ENCODE measurements at regions of chr14 and their contacts with region 1.

Region 1: GRCh38 chr14:76647697-76648298 is 113.5 kb upstream of the VASH1 start:
- DNase-seq: peak; percentile 47
- H3K4me3 ChIP-seq: no peak overlapping the region
- H3K27ac ChIP-seq: no peak overlapping the region
- H3K4me1 ChIP-seq: no peaks in the 10 kb centered on the region
- H3K27me3 ChIP-seq: peaks cover 0 to 2% of the 10 kb centered on the region in 2 experiments
- CTCF ChIP-seq: peak; percentile 81 to 87
- POLR2A ChIP-seq: no peak

Region 2: DNA sequence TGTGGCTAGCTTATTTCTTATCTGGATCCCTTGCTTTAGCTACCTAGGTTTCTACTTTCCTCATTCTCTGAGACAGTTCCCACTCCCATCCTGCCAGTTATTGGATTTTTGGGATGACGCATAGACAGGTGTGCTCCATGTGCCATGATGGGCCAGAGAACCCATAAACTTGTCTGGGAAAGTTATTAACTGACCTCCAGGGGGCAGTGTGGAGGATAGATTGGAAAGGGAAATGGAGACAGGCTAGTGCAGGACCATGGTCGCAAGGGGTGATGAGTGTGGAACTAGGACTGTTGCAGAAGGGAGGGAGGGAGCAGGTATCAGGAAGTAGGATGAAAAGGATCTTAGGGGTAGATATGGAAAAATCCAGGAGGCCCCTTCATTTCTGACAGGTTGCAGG is 191.6 kb before region 1 on chr14:
- CTCF ChIA-PET with region 1: interaction called, 53 read pairs
- POLR2A ChIA-PET with region 1: no interaction called
- dilution Hi-C with region 1: no loop called
- intact Hi-C with region 1: loop called (anchors 1 kb)
- DNase-seq: peak; percentile 45
- H3K4me3 ChIP-seq: no peak overlapping the region
- H3K27ac ChIP-seq: no peak overlapping the region
- H3K4me1 ChIP-seq: no peaks in the 10 kb centered on the region
- H3K27me3 ChIP-seq: no peaks in the 10 kb centered on the region
- CTCF ChIP-seq: peak; percentile 55 to 57
- POLR2A ChIP-seq: no peak

Region 3: GRCh38 chr14:76473481-76474263 is 174.1 kb before region 1 on chr14:
- CTCF ChIA-PET with region 1: interaction called, 4 read pairs
- POLR2A ChIA-PET with region 1: no interaction called
- dilution Hi-C with region 1: no loop called
- intact Hi-C with region 1: loop called (anchors 5 kb)
- DNase-seq: no peak
- H3K4me3 ChIP-seq: no peak overlapping the region
- H3K27ac ChIP-seq: no peak overlapping the region
- H3K4me1 ChIP-seq: no peaks in the 10 kb centered on the region
- H3K27me3 ChIP-seq: peaks cover 2 to 7% of the 10 kb centered on the region in 2 experiments
- CTCF ChIP-seq: peak in 1 of 2 donors; percentile 22
- POLR2A ChIP-seq: no peak

Region 4: DNA sequence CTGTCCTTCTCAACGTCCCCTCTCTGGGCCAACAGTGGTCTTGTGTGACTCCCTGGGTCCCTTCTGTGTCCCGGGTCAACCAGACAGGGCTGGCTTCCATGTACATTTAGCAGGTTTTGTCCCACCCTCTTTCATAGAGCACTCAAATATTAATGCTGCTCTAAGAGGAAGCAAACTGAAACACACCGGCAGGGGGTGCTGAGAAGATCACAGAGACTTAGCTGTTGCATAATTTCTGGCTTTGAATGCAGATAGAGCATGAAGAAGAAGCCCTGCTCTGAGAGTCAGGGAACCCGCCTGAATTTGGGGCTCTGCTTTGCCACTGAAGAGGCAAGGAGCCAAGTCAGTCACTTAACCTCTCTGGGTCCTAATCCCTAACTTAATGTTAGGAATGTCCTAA is 133.2 kb before region 1 on chr14:
- CTCF ChIA-PET with region 1: interaction called, 9 read pairs
- POLR2A ChIA-PET with region 1: no interaction called
- dilution Hi-C with region 1: no loop called
- intact Hi-C with region 1: loop called (anchors 1 kb)
- DNase-seq: peak; percentile 16
- H3K4me3 ChIP-seq: no peak overlapping the region
- H3K27ac ChIP-seq: no peak overlapping the region
- H3K4me1 ChIP-seq: no peaks in the 10 kb centered on the region
- H3K27me3 ChIP-seq: peaks cover 0 to 7% of the 10 kb centered on the region in 2 experiments
- CTCF ChIP-seq: no peak
- POLR2A ChIP-seq: no peak

Region 5: GRCh38 chr14:76901171-76902055 is 253.6 kb after region 1 on chr14:
- CTCF ChIA-PET with region 1: no interaction called
- POLR2A ChIA-PET with region 1: no interaction called
- dilution Hi-C with region 1: no loop called
- intact Hi-C with region 1: no loop called
- DNase-seq: no peak
- H3K4me3 ChIP-seq: no peak overlapping the region
- H3K27ac ChIP-seq: no peak overlapping the region
- H3K4me1 ChIP-seq: peaks cover 12% of the 10 kb centered on the region
- H3K27me3 ChIP-seq: peaks cover 2 to 7% of the 10 kb centered on the region in 2 experiments
- CTCF ChIP-seq: no peak
- POLR2A ChIP-seq: no peak